PC-9 (cell line): ENCODE measurements at regions of chr12 and their contacts with region 1.

Region 1: GRCh38 chr12:41293011-41293410 is 104.9 kb downstream of the PDZRN4 start:
- DNase-seq: peak; percentile 37 to 79
- H3K4me3 ChIP-seq: peak overlapping the region; percentile 32; the same call in 1 of the 2 replicates
- H3K27ac ChIP-seq: peak overlapping the region; percentile 73
- H3K4me1 ChIP-seq: peaks cover 21% of the 10 kb centered on the region
- H3K27me3 ChIP-seq: no peaks in the 10 kb centered on the region
- CTCF ChIP-seq: no peak

Region 2: GRCh38 chr12:40959041-40959440 is 334.0 kb before region 1 on chr12:
- CTCF ChIA-PET with region 1: no interaction called
- POLR2A ChIA-PET with region 1: no interaction called
- intact Hi-C with region 1: no loop called
- DNase-seq: no peak
- H3K4me3 ChIP-seq: no peak overlapping the region
- H3K27ac ChIP-seq: no peak overlapping the region
- H3K4me1 ChIP-seq: no peaks in the 10 kb centered on the region
- H3K27me3 ChIP-seq: no peaks in the 10 kb centered on the region
- CTCF ChIP-seq: no peak

Region 3: GRCh38 chr12:41304526-41304925 is 11.5 kb after region 1 on chr12:
- CTCF ChIA-PET with region 1: no interaction called
- POLR2A ChIA-PET with region 1: no interaction called
- intact Hi-C with region 1: loop called (anchors 1 kb)
- DNase-seq: peak; percentile 3 to 70
- H3K4me3 ChIP-seq: no peak overlapping the region
- H3K27ac ChIP-seq: peak overlapping the region; percentile 23; the same call in 1 of the 2 replicates
- H3K4me1 ChIP-seq: peaks cover 17% of the 10 kb centered on the region
- H3K27me3 ChIP-seq: no peaks in the 10 kb centered on the region
- CTCF ChIP-seq: no peak